AG04449 (cell line): ENCODE measurements at regions of chr14 and their contacts with region 1.

Region 1: DNA sequence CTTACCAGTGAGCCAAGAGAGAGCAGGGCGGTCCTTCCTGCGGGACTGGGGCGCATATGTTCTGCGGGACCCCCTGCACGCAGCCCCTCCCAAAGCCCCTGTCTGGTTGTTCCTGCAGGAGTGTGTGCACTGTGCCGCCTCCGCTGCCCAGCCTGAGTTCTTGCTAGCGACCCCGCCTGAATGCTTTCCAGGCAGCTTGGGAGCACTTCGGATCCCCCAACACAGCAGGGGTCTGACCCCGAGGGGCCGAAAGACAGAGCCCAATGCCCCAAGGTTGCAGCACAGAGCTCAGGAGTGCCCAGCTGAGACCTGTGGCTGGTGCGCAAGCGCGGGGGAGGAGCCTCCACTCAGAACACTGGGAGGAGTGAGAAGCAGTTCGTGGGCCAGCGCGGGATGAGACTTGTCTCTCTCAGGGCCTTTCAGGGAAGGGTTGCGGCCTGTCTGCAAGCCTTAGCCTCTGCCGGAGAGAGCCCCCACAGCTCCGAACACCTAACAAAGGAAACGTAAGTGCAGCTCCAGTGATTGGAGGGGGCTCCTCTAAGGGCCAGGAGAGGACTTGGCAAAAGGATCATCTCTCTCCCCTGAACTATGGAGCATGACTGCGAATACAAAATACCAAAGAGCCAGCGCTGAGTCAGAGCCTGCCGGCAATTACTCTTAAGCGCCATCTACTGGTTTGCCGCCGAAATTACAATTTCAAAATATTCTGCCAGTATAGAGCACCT is 50.5 kb downstream of the GTF2A1 start:
- DNase-seq: peak; percentile 37
- H3K4me3 ChIP-seq: peak overlapping the region; percentile 72
- CTCF ChIP-seq: peak; percentile 69

Region 2: GRCh38 chr14:81211844-81212243 is 41.6 kb after region 1 on chr14:
- CTCF ChIA-PET with region 1: interaction called, 14 read pairs
- POLR2A ChIA-PET with region 1: no interaction called
- DNase-seq: no peak
- H3K4me3 ChIP-seq: no peak overlapping the region
- CTCF ChIP-seq: peak; percentile 14